ENCODE measurements at regions of chr1 and their contacts with region 1.

Region 1: GRCh38 chr1:39196244-39197215 is 8.0 kb upstream of the MACF1 start:
- DNase-seq: peak; percentile 41
- CTCF ChIP-seq: no peak

Region 2: DNA sequence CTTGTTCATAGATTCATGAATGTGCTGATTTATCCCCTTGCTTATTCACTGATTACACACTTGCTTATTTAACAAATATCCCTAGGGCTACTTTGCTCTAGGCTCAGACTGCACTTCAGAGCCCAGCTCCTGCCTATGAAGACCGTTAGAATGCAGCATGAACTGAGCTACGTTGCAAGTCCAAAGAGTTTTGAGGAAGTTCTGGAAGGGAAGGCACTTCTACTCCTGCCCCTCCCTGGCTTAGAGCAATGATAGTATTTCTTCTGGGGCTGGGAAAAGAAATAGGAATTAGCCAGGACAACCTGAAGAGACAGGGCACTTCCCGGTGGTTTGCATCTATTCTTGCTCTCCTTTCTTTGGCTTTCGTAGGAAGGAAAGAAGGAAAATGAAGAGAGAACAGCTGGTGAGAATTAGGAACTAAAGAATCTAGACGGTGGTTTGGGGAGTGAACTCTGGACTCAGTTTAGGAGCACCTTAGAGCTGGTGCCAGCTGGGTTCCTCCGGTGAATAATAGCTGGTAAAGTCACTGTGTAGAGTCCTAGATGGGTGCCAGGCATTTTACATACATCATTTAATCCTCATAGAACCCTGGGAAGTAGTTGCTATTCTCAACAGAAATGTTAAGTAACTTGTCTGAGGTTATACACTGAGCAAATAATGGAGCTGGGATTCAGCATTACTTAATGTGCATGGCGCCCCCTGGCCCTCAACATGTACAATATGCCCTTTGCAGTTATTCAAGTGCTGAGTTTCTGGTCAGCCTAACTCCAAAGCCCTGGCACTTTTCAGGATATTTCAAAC is 104.5 kb before region 1 on chr1:
- CTCF ChIA-PET with region 1: interaction called, 127 read pairs
- POLR2A ChIA-PET with region 1: no interaction called
- DNase-seq: no peak
- CTCF ChIP-seq: peak; percentile 78

Region 3: DNA sequence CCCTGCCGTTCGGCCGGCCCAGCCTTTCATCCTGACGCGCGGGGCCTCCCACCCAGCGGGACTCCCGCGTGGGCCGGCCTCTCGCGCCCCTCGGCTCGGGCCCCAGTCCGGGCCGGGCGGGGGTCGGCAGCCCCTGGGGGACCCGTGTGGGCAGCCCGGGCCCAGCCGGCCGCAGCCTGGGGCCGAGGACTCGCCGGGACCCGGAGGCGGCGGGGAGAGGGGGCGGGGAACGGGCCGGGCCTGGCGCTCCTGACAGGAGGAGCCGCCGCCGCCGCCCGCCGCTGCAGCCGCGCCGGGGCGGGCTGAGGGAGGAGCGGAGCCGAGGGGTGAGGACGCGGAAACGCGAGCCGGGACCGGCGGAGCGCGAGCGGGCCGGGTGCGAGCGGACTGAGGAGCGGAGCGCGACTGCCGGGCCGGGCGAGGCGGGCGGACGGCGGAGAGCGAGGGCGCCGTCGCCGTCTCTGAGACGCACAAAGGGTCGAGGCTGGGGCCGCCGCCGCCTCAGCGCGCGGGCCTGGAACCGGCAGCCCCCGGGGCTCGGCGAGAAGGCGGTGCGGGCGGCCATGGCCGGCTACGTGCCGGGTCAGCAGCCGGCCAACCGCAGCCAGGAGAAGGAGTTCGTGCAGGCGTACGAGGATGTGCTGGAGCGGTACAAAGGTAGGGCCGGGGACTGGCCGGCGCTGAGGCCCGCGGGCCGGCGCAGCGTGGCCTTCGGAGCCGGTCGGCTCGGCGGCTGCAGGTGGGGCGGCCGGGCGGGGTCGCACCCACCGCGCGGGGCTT is 91.3 kb before region 1 on chr1:
- CTCF ChIA-PET with region 1: interaction called, 127 read pairs
- POLR2A ChIA-PET with region 1: no interaction called
- DNase-seq: peak; percentile 78
- CTCF ChIP-seq: no peak

Region 4: GRCh38 chr1:39158327-39159086 is 38.0 kb before region 1 on chr1:
- CTCF ChIA-PET with region 1: interaction called, 19 read pairs
- POLR2A ChIA-PET with region 1: no interaction called
- DNase-seq: peak; percentile 17
- CTCF ChIP-seq: no peak

Region 5: DNA sequence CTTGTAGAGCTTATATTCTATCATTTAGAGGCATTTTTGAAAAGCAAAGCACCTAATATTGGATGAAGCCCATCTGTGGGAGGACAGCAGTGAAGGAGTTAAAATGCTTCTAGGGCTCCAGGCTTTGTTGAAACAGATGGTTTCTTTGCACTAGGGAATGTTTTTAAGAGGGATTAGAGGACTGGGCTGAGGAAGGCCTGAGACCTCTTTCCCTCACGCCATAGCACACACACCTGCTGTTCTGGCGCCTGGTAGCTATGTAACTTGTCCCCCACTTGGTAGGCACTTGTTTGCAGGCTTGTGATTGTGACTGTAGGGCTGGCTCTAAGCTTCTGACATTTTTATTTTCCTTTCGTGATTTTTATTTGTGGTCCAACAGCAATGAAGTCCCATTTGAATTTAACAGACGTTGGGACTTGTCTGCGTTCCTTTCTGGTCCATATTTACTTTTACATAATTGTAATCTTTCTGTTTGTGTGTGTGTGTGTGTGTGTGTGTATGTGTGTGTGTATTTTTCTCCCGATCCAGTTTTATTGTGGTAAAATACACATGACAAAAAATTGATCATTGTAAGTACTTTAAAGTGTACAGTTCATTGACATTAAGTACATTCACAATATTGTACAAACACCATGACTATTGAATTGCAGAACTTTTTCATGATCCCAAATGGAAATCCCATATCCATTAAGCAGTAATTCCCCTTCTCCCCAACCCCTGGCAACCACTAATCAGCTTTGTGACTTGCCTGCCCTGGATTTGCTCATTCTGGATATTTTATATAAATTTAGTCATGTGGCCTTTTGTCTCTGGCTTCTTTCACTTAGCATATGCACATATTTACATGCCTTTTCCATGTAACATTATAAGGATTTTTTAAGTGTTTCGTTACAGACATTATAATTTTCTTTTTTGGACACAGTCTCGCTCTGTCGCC is 25.5 kb before region 1 on chr1:
- CTCF ChIA-PET with region 1: interaction called, 16 read pairs
- POLR2A ChIA-PET with region 1: no interaction called
- DNase-seq: no peak
- CTCF ChIP-seq: no peak

Region 6: DNA sequence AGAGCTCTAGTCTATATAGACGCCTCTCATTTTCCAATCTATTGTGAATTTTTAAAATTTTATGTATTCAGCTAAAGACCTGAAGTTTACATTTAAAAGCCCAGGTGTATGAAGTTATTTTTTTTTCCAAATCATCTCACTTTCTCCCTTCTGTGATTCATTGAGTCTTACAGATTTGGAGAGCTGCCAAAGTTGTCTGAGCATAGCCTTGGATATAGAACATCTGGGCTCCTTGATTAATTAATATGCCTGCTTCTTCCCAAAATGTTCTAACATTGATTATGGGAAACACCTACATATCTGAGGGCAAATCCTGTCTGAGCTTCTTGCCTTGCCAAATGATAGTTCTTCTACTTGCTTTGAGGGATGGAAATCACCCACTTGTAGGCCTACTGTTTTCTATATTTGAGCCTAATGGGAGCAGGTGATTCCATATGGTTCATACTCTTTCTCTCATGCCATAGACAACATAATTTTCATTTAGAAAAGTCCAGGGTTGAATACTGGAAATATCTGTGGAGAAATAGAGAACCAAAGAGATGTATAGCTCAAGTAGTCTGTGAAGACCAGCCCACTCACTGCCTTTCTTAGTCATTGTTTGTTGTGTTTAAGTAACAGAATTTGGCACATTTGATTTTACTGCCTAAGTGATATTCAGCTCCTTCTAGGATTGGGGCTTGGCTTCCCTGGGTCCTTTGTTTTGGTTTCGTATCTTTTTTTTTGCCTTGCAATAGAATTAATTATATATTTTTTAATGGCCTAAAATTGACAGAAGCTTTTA is 54.1 kb after region 1 on chr1:
- CTCF ChIA-PET with region 1: interaction called, 371 read pairs
- POLR2A ChIA-PET with region 1: no interaction called
- DNase-seq: no peak
- CTCF ChIP-seq: no peak

Region 7: GRCh38 chr1:39268112-39268581 is 71.6 kb after region 1 on chr1:
- CTCF ChIA-PET with region 1: interaction called, 371 read pairs
- POLR2A ChIA-PET with region 1: no interaction called
- DNase-seq: peak; percentile 65
- CTCF ChIP-seq: no peak